ENCODE measurements at regions of chr3 and their contacts with region 1.

Region 1: GRCh38 chr3:50245831-50246516 is 10.0 kb downstream of the GNAI2 start:
- DNase-seq: peak; percentile 88 to 97 (median 94)
- H3K4me3 ChIP-seq: peak overlapping the region; percentile 59
- H3K4me3 Mint-ChIP-seq: peak overlapping the region; percentile 70 to 79 (median 76)
- H3K27ac ChIP-seq: peak overlapping the region; percentile 75
- H3K27ac Mint-ChIP-seq: peak overlapping the region; percentile 81 to 99 (median 96)
- H3K4me1 ChIP-seq: peaks cover 92% of the 10 kb centered on the region
- H3K4me1 Mint-ChIP-seq: peaks cover 65 to 91% (median 75%) of the 10 kb centered on the region in 3 donors
- H3K27me3 ChIP-seq: no peaks in the 10 kb centered on the region
- H3K27me3 Mint-ChIP-seq: no peaks in the 10 kb centered on the region

Region 2: DNA sequence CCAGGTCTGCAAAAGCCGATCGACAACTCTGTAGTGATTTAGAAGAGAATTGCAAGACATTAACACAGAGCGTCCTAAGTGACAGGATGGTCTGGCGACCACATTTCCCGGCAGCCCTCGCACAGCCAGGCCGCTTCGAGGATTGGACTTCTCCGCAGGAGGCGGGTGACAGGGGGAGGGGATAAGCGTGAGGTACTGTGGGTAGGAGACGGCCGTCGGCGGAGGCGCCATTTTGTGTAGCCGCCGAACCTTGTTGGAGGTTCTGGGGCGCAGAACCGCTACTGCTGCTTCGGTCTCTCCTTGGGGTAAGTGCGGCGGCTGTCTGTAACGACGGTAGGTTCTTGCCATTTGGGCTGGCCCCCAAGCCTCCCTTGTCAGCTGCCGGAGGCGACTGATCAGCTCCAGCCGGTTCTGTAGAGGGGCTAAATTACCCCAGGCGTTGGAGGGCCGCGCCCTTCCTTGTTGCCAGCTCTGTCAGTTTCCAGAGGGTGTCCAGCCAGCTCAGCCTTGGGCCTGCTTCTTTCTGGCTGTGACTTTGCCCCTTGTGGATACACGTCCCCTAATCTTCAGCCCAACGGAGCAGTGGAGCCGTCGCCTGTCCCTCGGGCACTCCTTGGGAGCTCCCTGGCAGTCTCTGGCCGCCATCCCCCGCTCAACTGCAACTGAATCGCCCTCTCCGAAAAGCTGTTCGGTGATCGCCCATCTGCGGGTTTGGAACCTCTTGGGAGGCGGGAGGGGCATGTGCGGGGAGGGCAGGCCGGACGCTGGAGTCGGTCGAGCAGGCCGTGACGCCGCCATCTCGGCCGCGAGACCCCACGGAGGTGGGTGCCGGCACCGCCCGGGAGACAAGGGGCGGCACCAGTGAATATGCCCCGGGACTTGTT is 157.0 kb before region 1 on chr3 and contains the start of gene RBM5:
- CTCF ChIA-PET with region 1: no interaction called
- POLR2A ChIA-PET with region 1: no interaction called
- DNase-seq: peak; percentile 85 to 94 (median 86)
- H3K4me3 ChIP-seq: peak within 1 kb of the TSS; percentile 100
- H3K4me3 Mint-ChIP-seq: peak within 1 kb of the TSS; percentile 92 to 98 (median 96)
- H3K27ac ChIP-seq: peak within 1 kb of the TSS; percentile 99
- H3K27ac Mint-ChIP-seq: peak within 1 kb of the TSS; percentile 91 to 99 (median 98)
- H3K4me1 ChIP-seq: peaks cover 28% of the 10 kb centered on the region
- H3K4me1 Mint-ChIP-seq: peaks cover 33 to 43% (median 38%) of the 10 kb centered on the region in 3 donors
- H3K27me3 ChIP-seq: no peaks in the 10 kb centered on the region
- H3K27me3 Mint-ChIP-seq: peaks cover 0 to 2% of the 10 kb centered on the region in 2 donors
- total RNA-seq, gene RBM5: 127 to 136 TPM

Region 3: DNA sequence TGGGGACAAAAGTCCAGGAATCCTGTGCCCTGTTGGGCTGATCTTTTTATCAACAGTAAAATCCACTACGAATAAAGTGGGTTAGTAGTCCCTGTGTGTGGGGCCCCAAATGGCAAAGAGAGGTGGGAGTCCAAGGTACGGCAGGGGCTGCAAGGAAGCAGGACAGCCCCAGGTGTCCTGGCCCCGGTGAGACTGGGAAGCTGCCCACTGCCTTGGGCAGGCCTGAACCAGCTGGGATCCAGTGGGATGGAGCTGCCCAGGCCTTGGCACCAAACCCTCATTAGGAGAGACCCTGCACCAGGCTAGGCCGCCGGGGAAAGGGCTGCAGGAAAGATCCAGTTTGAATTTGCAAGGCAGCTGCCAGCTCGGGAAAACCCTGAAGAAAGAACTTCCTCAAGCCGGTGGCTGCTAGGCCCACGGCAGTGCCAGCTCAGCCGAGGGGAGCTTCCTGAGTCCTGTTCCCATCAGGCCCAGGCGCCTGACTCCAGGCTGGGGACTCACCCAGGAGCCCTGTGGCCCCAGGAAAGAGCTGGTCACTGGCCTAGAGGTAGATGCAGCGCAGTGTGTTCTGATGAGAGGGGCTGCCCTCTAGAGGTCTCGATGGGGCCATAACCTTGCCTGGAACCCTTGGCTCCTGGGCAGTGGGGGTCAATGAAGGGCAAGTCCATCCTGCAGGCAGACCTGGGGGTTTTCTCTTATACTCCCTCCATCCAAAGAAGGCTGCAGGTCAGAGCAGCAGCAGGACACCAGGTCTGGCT is 24.4 kb before region 1 on chr3:
- CTCF ChIA-PET with region 1: interaction called, 241 read pairs
- POLR2A ChIA-PET with region 1: interaction called, 14 read pairs
- DNase-seq: no peak
- H3K4me3 ChIP-seq: no peak overlapping the region
- H3K4me3 Mint-ChIP-seq: no peak overlapping the region
- H3K27ac ChIP-seq: no peak overlapping the region
- H3K27ac Mint-ChIP-seq: peak overlapping the region in 1 of 8 donors; percentile 72
- H3K4me1 ChIP-seq: peaks cover 4% of the 10 kb centered on the region
- H3K4me1 Mint-ChIP-seq: peaks cover 6 to 13% (median 6%) of the 10 kb centered on the region in 3 donors
- H3K27me3 ChIP-seq: no peaks in the 10 kb centered on the region
- H3K27me3 Mint-ChIP-seq: peaks cover 0 to 3% of the 10 kb centered on the region in 2 donors

Region 4: GRCh38 chr3:50235716-50236496 is 10.1 kb before region 1 on chr3 and contains the start of gene GNAI2:
- CTCF ChIA-PET with region 1: interaction called, 241 read pairs
- POLR2A ChIA-PET with region 1: interaction called, 20 read pairs
- DNase-seq: peak; percentile 98 to 99 (median 99)
- H3K4me3 ChIP-seq: peak within 1 kb of the TSS; percentile 99
- H3K4me3 Mint-ChIP-seq: peak within 1 kb of the TSS; percentile 87 to 99 (median 98)
- H3K27ac ChIP-seq: peak within 1 kb of the TSS; percentile 71
- H3K27ac Mint-ChIP-seq: peak within 1 kb of the TSS; percentile 93 to 99 (median 96)
- H3K4me1 ChIP-seq: peaks cover 37% of the 10 kb centered on the region
- H3K4me1 Mint-ChIP-seq: peaks cover 28 to 35% (median 33%) of the 10 kb centered on the region in 3 donors
- H3K27me3 ChIP-seq: no peaks in the 10 kb centered on the region
- H3K27me3 Mint-ChIP-seq: no peaks in the 10 kb centered on the region
- total RNA-seq, gene GNAI2: 259 to 265 TPM

Region 5: DNA sequence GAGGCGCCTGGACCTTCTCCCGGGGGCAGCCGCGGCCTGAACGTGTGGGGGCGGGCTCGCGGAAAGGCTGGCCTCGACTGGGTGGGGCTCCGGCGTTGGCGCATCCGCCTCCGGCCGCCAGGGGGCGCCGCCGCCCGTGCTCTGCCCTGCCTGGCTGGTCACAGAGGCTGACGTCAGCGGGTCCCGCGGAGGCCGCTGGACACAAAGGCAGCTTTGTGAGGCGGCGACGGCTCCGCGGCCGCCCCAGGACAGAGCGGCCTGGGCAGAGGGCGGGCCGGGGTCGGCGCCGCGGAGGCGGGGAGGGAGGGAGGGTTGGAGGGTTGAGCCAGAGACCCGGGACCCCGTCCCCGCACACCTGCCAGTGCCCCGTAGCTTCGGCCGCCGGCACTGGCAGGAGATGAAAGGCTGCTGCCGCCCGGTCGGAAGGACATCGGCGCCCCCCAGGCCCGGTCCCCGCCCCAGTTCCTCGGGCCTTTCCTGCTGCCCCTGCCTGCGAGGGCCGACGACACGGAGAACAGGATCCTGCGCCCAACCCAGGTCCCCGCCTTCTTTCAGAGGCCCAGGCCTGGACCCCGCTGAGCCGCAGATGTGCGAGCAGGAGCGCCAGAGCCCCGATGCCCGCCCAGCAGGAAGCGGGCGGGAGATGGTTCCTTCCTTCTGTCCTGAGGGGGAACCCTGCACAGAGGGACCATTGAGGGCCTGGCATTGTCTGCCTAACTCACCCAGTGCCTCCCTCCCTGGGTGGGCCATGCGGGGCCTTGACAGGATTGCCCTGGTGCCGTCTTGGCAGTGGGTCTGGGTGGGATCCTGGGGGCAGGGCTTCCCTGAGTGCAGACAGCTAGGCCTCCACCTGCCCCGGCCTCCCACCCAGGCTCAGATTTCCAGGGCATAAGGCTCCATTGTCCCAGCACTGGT is 14.3 kb after region 1 on chr3:
- CTCF ChIA-PET with region 1: interaction called, 101 read pairs
- POLR2A ChIA-PET with region 1: interaction called, 13 read pairs
- DNase-seq: peak; percentile 77 to 88 (median 80)
- H3K4me3 ChIP-seq: peak overlapping the region; percentile 22
- H3K4me3 Mint-ChIP-seq: peak overlapping the region in 6 of 7 donors; percentile 50 to 86 (median 70)
- H3K27ac ChIP-seq: peak overlapping the region; percentile 47
- H3K27ac Mint-ChIP-seq: peak overlapping the region in 7 of 8 donors; percentile 3 to 98 (median 59)
- H3K4me1 ChIP-seq: peaks cover 5% of the 10 kb centered on the region
- H3K4me1 Mint-ChIP-seq: peaks cover 0 to 13% (median 8%) of the 10 kb centered on the region in 3 donors
- H3K27me3 ChIP-seq: no peaks in the 10 kb centered on the region
- H3K27me3 Mint-ChIP-seq: no peaks in the 10 kb centered on the region

Region 6: DNA sequence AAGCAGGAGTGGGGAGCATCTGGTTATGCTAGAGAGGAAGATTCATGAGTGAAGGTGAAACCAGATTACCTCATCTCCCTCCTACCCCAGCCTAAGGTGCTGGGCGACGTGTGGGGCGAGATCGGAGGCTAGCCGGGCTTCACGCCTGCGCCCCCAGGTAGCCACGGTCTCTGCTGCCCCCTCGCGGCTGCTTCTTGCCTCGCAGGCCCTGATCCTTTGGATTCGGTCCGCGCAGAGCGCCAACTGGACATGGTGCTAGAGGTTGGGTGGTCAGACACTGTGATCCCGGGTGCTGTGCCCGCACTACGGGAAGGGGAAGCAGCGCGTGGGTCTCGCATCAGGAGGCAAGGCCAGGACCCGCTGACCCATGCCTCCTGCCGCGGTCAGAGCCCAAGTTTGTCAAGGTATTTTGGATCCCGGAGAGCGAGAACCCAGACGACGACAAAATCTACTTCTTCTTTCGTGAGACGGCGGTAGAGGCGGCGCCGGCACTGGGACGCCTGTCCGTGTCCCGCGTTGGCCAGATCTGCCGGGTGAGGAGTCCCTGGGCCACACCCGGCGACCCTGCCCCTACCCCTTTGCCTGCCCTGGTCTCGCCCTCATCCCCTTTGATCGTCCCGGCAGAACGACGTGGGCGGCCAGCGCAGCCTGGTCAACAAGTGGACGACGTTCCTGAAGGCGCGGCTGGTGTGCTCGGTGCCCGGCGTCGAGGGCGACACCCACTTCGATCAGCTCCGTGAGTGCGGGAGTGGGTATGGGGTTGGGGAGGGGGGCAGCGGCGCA is 27.1 kb after region 1 on chr3:
- CTCF ChIA-PET with region 1: interaction called, 16 read pairs
- POLR2A ChIA-PET with region 1: no interaction called
- DNase-seq: peak; percentile 73 to 87 (median 83)
- H3K4me3 ChIP-seq: peak overlapping the region; percentile 51
- H3K4me3 Mint-ChIP-seq: peak overlapping the region in 6 of 7 donors; percentile 45 to 77 (median 72)
- H3K27ac ChIP-seq: no peak overlapping the region
- H3K27ac Mint-ChIP-seq: peak overlapping the region in 7 of 8 donors; percentile 10 to 85 (median 63)
- H3K4me1 ChIP-seq: peaks cover 28% of the 10 kb centered on the region
- H3K4me1 Mint-ChIP-seq: peaks cover 23 to 32% (median 24%) of the 10 kb centered on the region in 3 donors
- H3K27me3 ChIP-seq: peaks cover 28% of the 10 kb centered on the region
- H3K27me3 Mint-ChIP-seq: peaks cover 27 to 35% of the 10 kb centered on the region in 2 donors

Region 7: GRCh38 chr3:50278868-50279224 is 32.9 kb after region 1 on chr3 and contains the start of gene LSMEM2:
- CTCF ChIA-PET with region 1: interaction called, 10 read pairs
- POLR2A ChIA-PET with region 1: no interaction called
- DNase-seq: no peak
- H3K4me3 ChIP-seq: no peak within 1 kb of the TSS
- H3K4me3 Mint-ChIP-seq: no peak within 1 kb of the TSS
- H3K27ac ChIP-seq: no peak within 1 kb of the TSS
- H3K27ac Mint-ChIP-seq: peak within 1 kb of the TSS in 1 of 8 donors; percentile 61
- H3K4me1 ChIP-seq: peaks cover 21% of the 10 kb centered on the region
- H3K4me1 Mint-ChIP-seq: peaks cover 15 to 23% (median 19%) of the 10 kb centered on the region in 3 donors
- H3K27me3 ChIP-seq: peaks cover 19% of the 10 kb centered on the region
- H3K27me3 Mint-ChIP-seq: peaks cover 24 to 28% of the 10 kb centered on the region in 2 donors
- total RNA-seq, gene LSMEM2: not detected

Region 8: GRCh38 chr3:50639055-50639494 is 393.1 kb after region 1 on chr3:
- CTCF ChIA-PET with region 1: no interaction called
- POLR2A ChIA-PET with region 1: no interaction called
- DNase-seq: no peak
- H3K4me3 ChIP-seq: no peak overlapping the region
- H3K4me3 Mint-ChIP-seq: no peak overlapping the region
- H3K27ac ChIP-seq: no peak overlapping the region
- H3K27ac Mint-ChIP-seq: peak overlapping the region in 6 of 8 donors; percentile 38 to 87 (median 68)
- H3K4me1 ChIP-seq: peaks cover 25% of the 10 kb centered on the region
- H3K4me1 Mint-ChIP-seq: peaks cover 26 to 40% (median 28%) of the 10 kb centered on the region in 3 donors
- H3K27me3 ChIP-seq: no peaks in the 10 kb centered on the region
- H3K27me3 Mint-ChIP-seq: no peaks in the 10 kb centered on the region

Measured in CD8-positive, alpha-beta memory T cell (primary cell).